ENCODE measurements at regions of chr3 and their contacts with region 1.

Region 1: DNA sequence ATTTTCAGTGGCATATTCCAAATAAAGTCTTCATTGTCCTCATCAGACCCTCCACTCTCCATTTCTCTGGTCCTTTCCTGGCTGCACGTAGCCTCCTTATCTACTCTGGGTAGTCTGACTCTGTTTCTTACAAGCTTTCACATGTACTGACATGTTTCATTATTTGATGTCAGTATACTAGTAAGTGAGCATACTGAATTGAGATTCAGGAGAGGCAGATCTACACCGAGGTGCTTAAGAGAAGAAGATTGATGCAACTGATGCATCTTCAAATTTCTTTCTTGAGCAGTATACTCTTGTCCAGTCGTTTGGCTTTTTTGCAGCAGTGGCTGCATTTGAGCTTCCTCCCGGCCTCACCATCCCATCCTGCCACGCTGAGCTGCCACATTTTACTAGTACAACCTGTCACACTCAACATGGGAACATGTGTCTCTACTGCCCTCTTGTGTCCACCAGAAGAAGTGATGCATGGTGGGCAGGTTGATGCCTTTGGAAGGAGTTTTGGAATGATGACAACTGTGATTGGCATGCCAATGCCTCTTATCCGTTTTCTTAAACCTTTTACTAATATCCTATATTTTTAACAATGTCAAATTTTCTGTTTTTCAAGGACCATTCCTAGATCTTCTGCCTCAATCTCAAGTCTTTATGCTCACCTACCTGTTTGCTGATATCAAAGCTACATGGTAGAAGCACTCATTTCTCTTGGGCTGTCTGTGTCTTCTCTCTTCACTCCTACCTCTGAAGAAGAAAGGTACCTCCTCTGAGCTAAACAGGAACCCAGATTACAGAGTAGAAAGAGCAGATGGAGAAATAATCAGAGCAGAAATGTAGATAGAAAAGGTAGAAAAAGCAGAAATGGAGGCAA is 38.7 kb downstream of the GUCA1C start:
- DNase-seq: peak; percentile 83
- ATAC-seq: peak; percentile 96
- H3K4me3 Mint-ChIP-seq: peak overlapping the region; percentile 33
- H3K27ac Mint-ChIP-seq: peak overlapping the region; percentile 71
- H3K4me1 Mint-ChIP-seq: peaks cover 18% of the 10 kb centered on the region
- H3K27me3 Mint-ChIP-seq: peaks cover 22% of the 10 kb centered on the region

Region 2: DNA sequence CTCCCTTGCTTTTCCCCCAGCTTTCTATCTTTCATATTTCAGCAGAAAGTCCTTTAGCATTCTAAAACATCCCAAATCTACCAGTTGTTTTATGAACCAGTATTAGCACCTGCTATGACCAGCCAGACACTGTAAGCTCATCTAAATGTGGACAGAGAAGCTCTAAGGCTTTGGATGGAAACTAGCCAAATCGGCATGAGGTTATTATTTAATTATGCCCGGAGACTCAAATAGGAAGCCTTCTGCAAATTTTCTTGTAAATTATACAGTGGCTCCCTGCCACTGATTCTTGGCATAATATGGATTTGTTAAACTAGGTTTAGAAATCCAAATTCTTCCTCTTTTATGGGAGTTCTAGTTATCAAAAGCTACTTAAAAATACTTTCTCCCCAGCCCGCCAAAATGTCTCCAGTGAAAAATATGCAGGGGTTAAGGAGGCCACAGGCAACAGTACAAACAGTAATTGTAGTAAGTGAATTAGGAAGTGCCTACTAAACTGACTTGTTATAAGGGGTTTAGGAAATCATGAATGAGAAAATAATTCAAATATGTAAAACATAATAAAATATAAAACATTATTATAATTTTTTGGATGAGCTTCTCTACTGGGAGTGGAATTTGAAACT is 420.0 kb before region 1 on chr3:
- CTCF ChIA-PET with region 1: interaction called, 12 read pairs
- DNase-seq: no peak
- ATAC-seq: no peak
- H3K4me3 Mint-ChIP-seq: no peak overlapping the region
- H3K27ac Mint-ChIP-seq: no peak overlapping the region
- H3K4me1 Mint-ChIP-seq: no peaks in the 10 kb centered on the region
- H3K27me3 Mint-ChIP-seq: peaks cover 7% of the 10 kb centered on the region

Region 3: GRCh38 chr3:108662130-108662738 is 252.8 kb before region 1 on chr3:
- CTCF ChIA-PET with region 1: interaction called, 154 read pairs
- DNase-seq: peak; percentile 56
- ATAC-seq: peak; percentile 85
- H3K4me3 Mint-ChIP-seq: no peak overlapping the region
- H3K27ac Mint-ChIP-seq: no peak overlapping the region
- H3K4me1 Mint-ChIP-seq: peaks cover 17% of the 10 kb centered on the region
- H3K27me3 Mint-ChIP-seq: no peaks in the 10 kb centered on the region

Region 4: GRCh38 chr3:108757404-108757982 is 157.5 kb before region 1 on chr3 and contains the start of gene RETNLB:
- CTCF ChIA-PET with region 1: interaction called, 10 read pairs
- DNase-seq: no peak
- ATAC-seq: no peak
- H3K4me3 Mint-ChIP-seq: no peak within 1 kb of the TSS
- H3K27ac Mint-ChIP-seq: no peak within 1 kb of the TSS
- H3K4me1 Mint-ChIP-seq: peaks cover 11% of the 10 kb centered on the region
- H3K27me3 Mint-ChIP-seq: no peaks in the 10 kb centered on the region
- total RNA-seq, gene RETNLB: not detected

Region 5: DNA sequence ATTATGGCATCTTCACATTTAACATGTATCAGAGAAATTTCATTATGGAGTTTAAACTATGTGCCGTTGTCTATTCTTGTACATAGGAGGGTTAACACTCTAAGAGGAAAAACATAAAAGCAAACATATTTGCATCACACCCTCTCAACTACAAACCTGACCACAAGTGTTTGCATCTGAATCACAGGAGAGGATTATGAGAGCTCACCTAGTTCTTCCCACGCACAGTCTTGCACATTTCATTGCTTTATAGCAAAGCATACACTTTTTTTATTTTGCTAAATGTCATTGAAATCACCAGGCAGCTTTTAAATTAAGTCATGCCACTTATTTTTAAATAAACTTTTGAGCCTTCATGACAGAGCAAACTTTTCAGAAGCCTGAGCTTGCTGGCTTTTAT is 79.9 kb before region 1 on chr3:
- CTCF ChIA-PET with region 1: interaction called, 15 read pairs
- DNase-seq: peak; percentile 64
- ATAC-seq: peak; percentile 73
- H3K4me3 Mint-ChIP-seq: peak overlapping the region; percentile 68
- H3K27ac Mint-ChIP-seq: peak overlapping the region; percentile 96
- H3K4me1 Mint-ChIP-seq: peaks cover 80% of the 10 kb centered on the region
- H3K27me3 Mint-ChIP-seq: no peaks in the 10 kb centered on the region

Measured in activated CD8-positive, alpha-beta memory T cell treated with anti-CD3 and anti-CD28 coated beads, Interleukin-2, amount 10 ng/mL, durations not matched to agents 7 days and 5 days (primary cell).